GM12878 (cell line): ENCODE measurements at regions of chr5 and their contacts with region 1.

Region 1: DNA sequence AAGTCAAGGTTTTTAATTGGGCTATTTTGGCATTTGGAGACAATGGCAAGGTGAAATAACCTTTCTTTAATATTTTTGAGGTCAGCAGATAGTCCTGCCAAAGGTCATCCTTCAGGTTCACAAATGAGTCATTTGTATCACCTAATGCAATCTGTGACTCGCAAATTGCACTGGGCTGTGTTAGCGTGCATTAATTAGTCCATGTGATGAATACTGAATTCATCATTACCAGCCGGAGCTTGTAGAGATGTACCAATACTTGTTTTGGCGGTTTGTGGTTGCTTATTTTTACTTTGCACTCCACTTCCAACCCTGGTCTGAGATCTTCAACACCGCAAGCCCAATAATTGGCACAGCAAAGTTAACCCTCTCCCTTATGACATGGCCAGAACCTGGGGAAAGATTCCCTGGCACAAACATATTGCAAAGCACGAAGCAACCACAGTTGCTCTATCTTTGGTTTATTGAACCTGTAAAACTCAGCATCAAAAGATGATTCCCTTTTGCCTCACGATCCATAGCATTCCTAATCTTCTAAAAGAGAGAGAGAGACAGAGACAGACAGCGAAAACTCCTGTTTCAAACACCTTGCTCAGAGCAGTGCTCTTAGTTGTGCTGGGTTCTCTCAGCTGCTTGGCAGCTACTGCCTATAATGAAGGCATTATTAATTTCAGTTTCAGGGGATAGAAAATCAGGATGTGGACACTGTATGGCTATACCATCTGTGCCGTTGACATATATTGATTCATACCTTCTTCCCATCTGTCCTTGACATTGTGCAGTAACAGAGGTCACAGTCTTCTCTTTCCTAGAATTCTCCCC is 178.1 kb downstream of the EBF1 start:
- DNase-seq: peak; percentile 75
- ATAC-seq: peak; percentile 70
- H3K4me3 ChIP-seq: no peak overlapping the region
- H3K27ac ChIP-seq: peak overlapping the region; percentile 45
- H3K4me1 ChIP-seq: peaks cover 3% of the 10 kb centered on the region
- H3K27me3 ChIP-seq: no peaks in the 10 kb centered on the region
- CTCF ChIP-seq: no peak
- EP300 ChIP-seq: peak; percentile 91 to 98
- POLR2A ChIP-seq: no peak
- RAD21 ChIP-seq: no peak

Region 2: DNA sequence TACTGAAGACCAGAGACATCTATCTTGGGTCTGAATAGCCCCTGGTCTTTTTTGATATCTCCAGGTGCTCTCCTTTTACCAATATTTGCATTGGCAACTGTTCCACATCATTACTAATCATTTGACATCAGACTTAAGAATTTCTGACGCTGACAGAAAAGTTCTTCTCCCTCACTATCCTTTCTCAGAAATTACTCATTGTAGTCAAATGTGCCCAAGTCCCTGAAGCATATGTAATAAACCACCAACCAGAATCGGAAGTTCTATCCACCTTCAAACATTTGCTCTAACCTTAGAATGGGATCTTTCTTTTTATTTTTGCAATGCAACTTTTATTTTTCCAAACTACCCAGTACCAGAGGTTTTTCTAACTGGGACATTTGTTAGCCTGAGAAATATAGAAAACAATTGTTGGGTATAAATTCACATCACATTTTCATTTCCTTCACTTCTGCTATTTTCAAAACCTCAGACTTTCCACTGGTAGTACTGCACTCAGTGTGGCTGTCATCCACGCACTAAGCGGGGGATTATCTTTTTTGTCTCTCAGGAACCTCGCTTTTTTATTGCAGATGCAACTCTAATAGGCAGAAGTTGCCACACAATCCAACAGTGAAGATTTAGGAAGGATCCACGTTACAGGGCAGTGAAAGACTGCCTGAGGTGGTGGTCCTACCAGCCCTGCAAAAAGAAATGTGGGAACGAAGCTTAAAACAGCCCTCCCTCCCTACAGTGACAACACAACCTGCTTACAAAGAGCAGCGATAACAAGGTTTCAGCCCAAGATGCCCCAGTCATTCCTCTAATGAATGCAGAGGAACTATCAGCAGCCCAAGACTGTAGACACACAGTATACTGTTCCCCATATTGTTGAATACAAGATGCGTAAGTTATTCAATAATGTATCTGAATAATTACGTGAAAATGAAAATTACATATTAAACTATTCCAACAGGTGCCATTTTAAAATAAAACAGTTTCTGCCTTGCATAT is 23.2 kb before region 1 on chr5:
- CTCF ChIA-PET with region 1: interaction called, 9 read pairs
- POLR2A ChIA-PET with region 1: interaction called, 10 read pairs
- RAD21 ChIA-PET with region 1: interaction called, 36 read pairs
- SMC1A ChIA-PET with region 1: interaction called, 331 read pairs
- in situ Hi-C with region 1: no loop called
- intact Hi-C with region 1: loop called (anchors 1 kb)
- DNase-seq: no peak
- ATAC-seq: peak; percentile 82
- H3K4me3 ChIP-seq: 0 out of 2 replicates have a peak overlapping the region, but pooled peaks have one; percentile 15
- H3K27ac ChIP-seq: peak overlapping the region; percentile 83
- H3K4me1 ChIP-seq: peaks cover 14% of the 10 kb centered on the region
- H3K27me3 ChIP-seq: no peaks in the 10 kb centered on the region
- CTCF ChIP-seq: no peak
- EP300 ChIP-seq: peak; percentile 70 to 74; a peak in 3 of 4 replicates
- POLR2A ChIP-seq: no peak
- RAD21 ChIP-seq: no peak

Region 3: GRCh38 chr5:158937381-158937952 is 15.8 kb after region 1 on chr5:
- CTCF ChIA-PET with region 1: interaction called, 6 read pairs
- POLR2A ChIA-PET with region 1: interaction called, 5 read pairs
- RAD21 ChIA-PET with region 1: interaction called, 21 read pairs
- SMC1A ChIA-PET with region 1: interaction called, 17 read pairs
- in situ Hi-C with region 1: no loop called
- intact Hi-C with region 1: no loop called
- DNase-seq: no peak
- ATAC-seq: no peak
- H3K4me3 ChIP-seq: no peak overlapping the region
- H3K27ac ChIP-seq: no peak overlapping the region
- H3K4me1 ChIP-seq: peaks cover 8% of the 10 kb centered on the region; the same call in 1 of the 2 replicates
- H3K27me3 ChIP-seq: no peaks in the 10 kb centered on the region
- CTCF ChIP-seq: no peak
- EP300 ChIP-seq: no peak
- POLR2A ChIP-seq: no peak
- RAD21 ChIP-seq: no peak

Region 4: GRCh38 chr5:159003037-159004030 is 81.7 kb after region 1 on chr5:
- CTCF ChIA-PET with region 1: no interaction called
- POLR2A ChIA-PET with region 1: interaction called, 3 read pairs
- RAD21 ChIA-PET with region 1: interaction called, 6 read pairs
- SMC1A ChIA-PET with region 1: interaction called, 13 read pairs
- in situ Hi-C with region 1: no loop called
- intact Hi-C with region 1: no loop called
- DNase-seq: no peak
- ATAC-seq: no peak
- H3K4me3 ChIP-seq: no peak overlapping the region
- H3K27ac ChIP-seq: no peak overlapping the region
- H3K4me1 ChIP-seq: peaks cover 5% of the 10 kb centered on the region; the same call in 1 of the 2 replicates
- H3K27me3 ChIP-seq: no peaks in the 10 kb centered on the region
- CTCF ChIP-seq: no peak
- EP300 ChIP-seq: no peak
- POLR2A ChIP-seq: no peak
- RAD21 ChIP-seq: no peak

Region 5: GRCh38 chr5:159100025-159100781 is 178.6 kb after region 1 on chr5:
- CTCF ChIA-PET with region 1: interaction called, 3 read pairs
- POLR2A ChIA-PET with region 1: interaction called, 6 read pairs
- RAD21 ChIA-PET with region 1: interaction called, 32 read pairs
- SMC1A ChIA-PET with region 1: interaction called, 12 read pairs
- in situ Hi-C with region 1: no loop called
- intact Hi-C with region 1: no loop called
- DNase-seq: peak; percentile 81
- ATAC-seq: peak; percentile 58
- H3K4me3 ChIP-seq: peak overlapping the region; percentile 67
- H3K27ac ChIP-seq: peak overlapping the region; percentile 67
- H3K4me1 ChIP-seq: peaks cover 5% of the 10 kb centered on the region
- H3K27me3 ChIP-seq: no peaks in the 10 kb centered on the region
- CTCF ChIP-seq: no peak
- EP300 ChIP-seq: peak in 1 of 2 experiments; percentile 1; a peak in 2 of 4 replicates
- POLR2A ChIP-seq: peak; percentile 93
- RAD21 ChIP-seq: no peak